ENCODE measurements at regions of chr22 and their contacts with region 1.

Region 1: DNA sequence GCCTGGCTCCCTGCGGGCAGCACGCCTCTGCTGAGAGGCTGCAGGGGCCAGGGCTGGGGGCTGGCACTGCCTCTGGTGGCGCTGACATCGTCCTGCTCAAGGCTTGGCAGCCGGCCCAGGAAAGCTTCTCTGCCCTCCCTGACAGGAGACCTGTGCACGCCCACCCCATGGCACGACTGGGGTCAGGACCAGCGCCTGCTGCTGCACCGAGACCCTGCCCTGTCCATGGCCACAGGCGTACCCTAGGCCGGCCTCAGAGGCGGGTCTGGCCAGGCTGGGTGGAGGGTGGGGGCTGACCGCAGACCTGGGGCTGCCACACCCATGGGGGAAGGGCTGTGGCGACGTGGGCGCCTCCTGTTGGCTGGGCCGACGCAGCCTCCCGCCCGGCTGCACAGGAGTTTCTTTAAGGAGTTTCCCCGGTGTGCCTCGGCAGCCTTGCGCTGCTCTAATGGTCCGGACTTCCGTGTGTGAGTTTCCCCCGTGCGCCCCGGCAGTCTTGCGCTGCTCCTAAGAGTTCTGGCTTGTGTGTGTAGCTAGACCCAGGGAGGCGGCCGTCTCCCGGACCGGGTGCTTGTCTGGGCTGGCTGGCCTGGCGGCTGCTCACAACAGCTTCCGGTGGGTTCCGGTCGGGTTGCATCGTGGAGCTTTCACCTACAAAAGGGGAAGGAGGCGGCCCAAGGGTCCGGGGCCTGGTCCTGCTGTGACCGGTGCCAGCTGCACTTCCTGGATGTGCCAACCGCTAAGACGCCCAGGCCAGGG is 4.6 kb downstream of the TRABD start:
- DNase-seq: peak; percentile 87
- H3K4me3 Mint-ChIP-seq: peak overlapping the region; percentile 79
- H3K27ac Mint-ChIP-seq: peak overlapping the region; percentile 95
- H3K4me1 Mint-ChIP-seq: peaks cover 57% of the 10 kb centered on the region
- H3K27me3 Mint-ChIP-seq: no peaks in the 10 kb centered on the region

Region 2: DNA sequence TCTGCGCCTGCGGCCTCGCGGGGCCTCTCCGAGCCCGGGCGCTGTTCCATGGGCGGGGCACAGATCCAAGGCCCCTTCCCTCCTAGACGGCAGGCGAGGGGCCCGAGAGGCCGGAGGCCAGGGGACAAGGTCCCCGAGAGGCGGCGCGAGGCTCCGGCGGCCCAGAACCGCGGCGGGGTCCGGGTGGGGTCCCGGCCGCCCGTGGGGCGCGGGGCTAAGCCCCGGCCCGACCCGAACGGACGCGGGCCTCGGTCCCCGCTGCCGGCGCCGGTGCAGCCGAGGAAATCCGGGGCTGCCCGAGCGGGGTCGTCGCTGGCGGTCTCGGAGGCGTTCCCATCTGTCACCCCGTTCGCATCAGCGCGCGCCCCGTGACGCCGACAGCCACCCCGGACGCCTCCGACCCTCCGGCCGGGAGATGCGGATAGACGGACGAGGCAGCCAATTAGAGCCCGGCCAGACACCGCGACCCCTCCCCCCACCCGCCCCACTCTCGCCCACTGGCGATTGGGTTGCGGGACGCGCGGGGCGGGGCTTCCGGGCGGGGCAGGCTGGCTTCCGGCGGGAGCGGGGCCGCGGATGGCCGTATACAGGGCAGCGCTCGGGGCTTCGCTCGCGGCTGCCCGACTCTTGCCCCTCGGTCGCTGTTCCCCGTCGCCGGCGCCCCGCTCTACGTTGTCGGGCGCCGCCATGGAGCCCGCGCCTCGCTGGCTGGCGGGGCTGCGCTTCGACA is 10.3 kb after region 1 on chr22 and contains the start of gene SELENOO:
- CTCF ChIA-PET with region 1: interaction called, 3 read pairs
- POLR2A ChIA-PET with region 1: interaction called, 26 read pairs
- DNase-seq: peak; percentile 93
- H3K4me3 Mint-ChIP-seq: peak within 1 kb of the TSS; percentile 81
- H3K27ac Mint-ChIP-seq: peak within 1 kb of the TSS; percentile 40
- H3K4me1 Mint-ChIP-seq: peaks cover 26% of the 10 kb centered on the region
- H3K27me3 Mint-ChIP-seq: no peaks in the 10 kb centered on the region
- total RNA-seq, gene SELENOO: 21.5 TPM

Measured in activated CD4-positive, alpha-beta memory T cell treated with anti-CD3 and anti-CD28 coated beads, Interleukin-2, amount 10 ng/mL, durations not matched to agents 7 days and 5 days (primary cell).